Heart right ventricle (tissue), 16 donors: ENCODE measurements at regions of chr18 and their contacts with region 1.

Region 1: GRCh38 chr18:35040988-35041814 is at the start of gene MAPRE2:
- DNase-seq: peak; percentile 98 to 99
- ATAC-seq: peak; percentile 96 to 98 (median 97)
- H3K4me3 ChIP-seq: peak within 1 kb of the TSS; percentile 65 to 94 (median 82)
- H3K27ac ChIP-seq: peak within 1 kb of the TSS; percentile 63 to 92 (median 88)
- H3K4me1 ChIP-seq: peaks cover under 1 to 67% (median 44%) of the 10 kb centered on the region in 9 donors
- H3K27me3 ChIP-seq: no peaks in the 10 kb centered on the region
- CTCF ChIP-seq: peak in 1 of 9 donors; percentile 9
- total RNA-seq, gene MAPRE2: 63.9 to 211 (median 137) TPM

Region 2: DNA sequence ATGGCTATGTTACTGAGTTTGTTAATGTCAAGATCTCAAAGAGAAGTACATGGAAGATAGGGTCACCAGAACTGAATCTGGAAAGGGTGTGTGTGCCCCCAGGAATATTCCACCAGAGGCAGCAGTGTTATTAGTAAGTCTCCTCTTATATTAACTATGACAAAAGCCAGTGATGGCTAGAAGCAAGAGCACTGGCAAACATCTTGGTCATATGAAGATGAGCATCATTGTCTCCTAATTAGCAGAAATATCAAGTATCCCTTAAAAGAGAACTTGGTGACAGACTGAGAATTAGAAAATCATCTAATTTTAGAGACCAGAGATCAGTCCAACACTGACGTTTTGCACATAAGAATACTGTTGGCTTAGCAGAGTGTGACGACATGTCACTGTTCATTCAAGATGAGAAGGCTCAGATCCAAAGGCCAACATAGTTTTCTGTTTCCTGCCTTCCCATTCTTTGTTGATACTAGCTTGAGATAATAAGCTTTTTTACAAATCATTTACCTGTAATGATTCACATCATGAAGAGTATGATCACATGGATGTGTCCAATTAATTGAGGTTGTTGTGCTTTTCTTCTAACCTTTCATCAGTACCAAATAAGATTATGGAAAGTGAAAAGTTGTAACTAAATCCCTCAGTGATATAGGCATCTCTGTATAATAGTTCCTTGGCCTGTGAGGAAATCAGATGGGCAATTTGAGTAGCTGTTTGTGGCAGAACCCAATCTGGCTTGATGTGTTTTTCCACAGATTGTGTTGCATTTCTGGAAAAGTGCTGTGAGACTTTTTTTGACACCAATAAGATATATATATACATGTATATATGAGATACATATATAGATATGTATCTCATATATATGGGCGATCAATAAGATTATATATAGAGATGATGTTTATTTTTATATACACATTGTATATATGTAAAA is 44.5 kb after region 1 on chr18:
- intact Hi-C with region 1: loop called in 4 of 10 experiments (anchors 1 to 5 kb)
- DNase-seq: peak in 1 of 2 donors; percentile 26
- ATAC-seq: peak in 5 of 8 donors; percentile 72 to 85 (median 78)
- H3K4me3 ChIP-seq: no peak overlapping the region
- H3K27ac ChIP-seq: peak overlapping the region in 9 of 10 donors; percentile 38 to 87 (median 79)
- H3K4me1 ChIP-seq: peaks cover 7 to 92% (median 70%) of the 10 kb centered on the region in 9 donors
- H3K27me3 ChIP-seq: no peaks in the 10 kb centered on the region
- CTCF ChIP-seq: peak in 1 of 9 donors; percentile 11

Region 3: DNA sequence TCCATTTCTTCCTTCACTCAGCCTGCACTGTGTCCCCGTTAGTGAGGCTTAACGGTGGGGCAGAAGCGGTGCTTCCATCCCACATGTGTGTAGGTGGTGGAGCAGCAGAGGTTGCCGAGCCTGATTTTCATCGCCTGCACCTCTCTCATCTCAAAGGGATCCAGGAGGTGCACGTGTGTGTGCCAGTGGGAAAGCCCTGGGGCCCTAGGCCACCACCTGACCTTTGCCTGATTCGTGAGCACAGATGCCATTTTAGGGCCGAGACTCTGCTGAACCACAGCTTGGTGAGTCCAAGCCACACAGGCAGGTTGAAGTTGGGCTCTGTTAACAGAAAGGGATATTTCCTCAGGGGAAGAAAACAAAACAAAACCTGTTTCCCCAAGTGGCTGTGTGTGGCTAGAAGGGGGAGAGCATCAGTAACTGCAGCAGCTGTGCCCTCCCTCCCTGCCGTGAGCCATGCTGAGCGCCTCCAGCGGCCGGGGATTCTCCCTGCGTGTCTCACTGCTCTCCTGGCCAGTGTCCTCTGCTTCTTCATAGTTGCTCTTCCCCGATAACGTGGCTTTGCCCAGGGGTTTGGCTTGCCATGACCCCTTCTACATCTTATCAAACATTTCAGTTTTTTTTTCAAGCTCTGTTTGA is 81.5 kb after region 1 on chr18:
- intact Hi-C with region 1: loop called in 2 of 10 experiments (anchors 5 kb)
- DNase-seq: no peak
- ATAC-seq: peak in 7 of 8 donors; percentile 41 to 71 (median 60)
- H3K4me3 ChIP-seq: no peak overlapping the region
- H3K27ac ChIP-seq: peak overlapping the region in 6 of 10 donors; percentile 9 to 50 (median 23)
- H3K4me1 ChIP-seq: peaks cover 11 to 76% (median 56%) of the 10 kb centered on the region in 9 donors
- H3K27me3 ChIP-seq: no peaks in the 10 kb centered on the region
- CTCF ChIP-seq: peak in 6 of 9 donors; percentile 19 to 51 (median 39)